ENCODE measurements at regions of chr6 and their contacts with region 1.

Region 1: GRCh38 chr6:80605165-80605989 is 498.9 kb downstream of the BCKDHB start:
- DNase-seq: no peak
- ATAC-seq: peak in 3 of 4 donors; percentile 75 to 79 (median 77)
- H3K4me3 ChIP-seq: no peak overlapping the region
- H3K27ac ChIP-seq: no peak overlapping the region
- H3K4me1 ChIP-seq: peaks cover 0 to 9% (median 5%) of the 10 kb centered on the region in 3 donors
- H3K27me3 ChIP-seq: no peaks in the 10 kb centered on the region
- CTCF ChIP-seq: peak; percentile 8 to 42 (median 34)

Region 2: GRCh38 chr6:80547827-80548226 is 57.5 kb before region 1 on chr6:
- intact Hi-C with region 1: no loop called
- DNase-seq: no peak
- ATAC-seq: peak in 1 of 4 donors; percentile 19
- H3K4me3 ChIP-seq: no peak overlapping the region
- H3K27ac ChIP-seq: no peak overlapping the region
- H3K4me1 ChIP-seq: no peaks in the 10 kb centered on the region
- H3K27me3 ChIP-seq: no peaks in the 10 kb centered on the region
- CTCF ChIP-seq: no peak

Region 3: GRCh38 chr6:81752138-81752920 is 1147.0 kb after region 1 on chr6 and contains the start of gene TENT5A:
- intact Hi-C with region 1: loop called in 1 of 3 experiments (anchors 10 kb)
- DNase-seq: peak; percentile 91 to 95 (median 93)
- ATAC-seq: peak; percentile 86 to 91 (median 89)
- H3K4me3 ChIP-seq: peak within 1 kb of the TSS; percentile 53 to 91 (median 84)
- H3K27ac ChIP-seq: peak within 1 kb of the TSS; percentile 90 to 99 (median 96)
- H3K4me1 ChIP-seq: peaks cover 0 to 23% (median 14%) of the 10 kb centered on the region in 3 donors
- H3K27me3 ChIP-seq: no peaks in the 10 kb centered on the region
- CTCF ChIP-seq: no peak
- total RNA-seq, gene TENT5A: 2.8 to 7.7 (median 5.1) TPM